Activated naive CD4-positive, alpha-beta T cell treated with anti-CD3 and anti-CD28 coated beads for 36 hours (primary cell): ENCODE measurements at regions of chr17 and their contacts with region 1.

Region 1: GRCh38 chr17:7435221-7435675 is at the start of gene TMEM102:
- DNase-seq: peak; percentile 99
- H3K4me3 Mint-ChIP-seq: peak within 1 kb of the TSS; percentile 92
- H3K27ac Mint-ChIP-seq: peak within 1 kb of the TSS; percentile 91
- H3K4me1 Mint-ChIP-seq: peaks cover 36% of the 10 kb centered on the region
- H3K27me3 Mint-ChIP-seq: peaks cover 12% of the 10 kb centered on the region
- total RNA-seq, gene TMEM102: 3.3 to 3.5 TPM

Region 2: GRCh38 chr17:6948562-6948961 is 486.7 kb before region 1 on chr17:
- CTCF ChIA-PET with region 1: no interaction called
- intact Hi-C with region 1: no loop called
- DNase-seq: peak; percentile 20
- H3K4me3 Mint-ChIP-seq: no peak overlapping the region
- H3K27ac Mint-ChIP-seq: peak overlapping the region; percentile 32
- H3K4me1 Mint-ChIP-seq: peaks cover 12% of the 10 kb centered on the region
- H3K27me3 Mint-ChIP-seq: no peaks in the 10 kb centered on the region

Region 3: DNA sequence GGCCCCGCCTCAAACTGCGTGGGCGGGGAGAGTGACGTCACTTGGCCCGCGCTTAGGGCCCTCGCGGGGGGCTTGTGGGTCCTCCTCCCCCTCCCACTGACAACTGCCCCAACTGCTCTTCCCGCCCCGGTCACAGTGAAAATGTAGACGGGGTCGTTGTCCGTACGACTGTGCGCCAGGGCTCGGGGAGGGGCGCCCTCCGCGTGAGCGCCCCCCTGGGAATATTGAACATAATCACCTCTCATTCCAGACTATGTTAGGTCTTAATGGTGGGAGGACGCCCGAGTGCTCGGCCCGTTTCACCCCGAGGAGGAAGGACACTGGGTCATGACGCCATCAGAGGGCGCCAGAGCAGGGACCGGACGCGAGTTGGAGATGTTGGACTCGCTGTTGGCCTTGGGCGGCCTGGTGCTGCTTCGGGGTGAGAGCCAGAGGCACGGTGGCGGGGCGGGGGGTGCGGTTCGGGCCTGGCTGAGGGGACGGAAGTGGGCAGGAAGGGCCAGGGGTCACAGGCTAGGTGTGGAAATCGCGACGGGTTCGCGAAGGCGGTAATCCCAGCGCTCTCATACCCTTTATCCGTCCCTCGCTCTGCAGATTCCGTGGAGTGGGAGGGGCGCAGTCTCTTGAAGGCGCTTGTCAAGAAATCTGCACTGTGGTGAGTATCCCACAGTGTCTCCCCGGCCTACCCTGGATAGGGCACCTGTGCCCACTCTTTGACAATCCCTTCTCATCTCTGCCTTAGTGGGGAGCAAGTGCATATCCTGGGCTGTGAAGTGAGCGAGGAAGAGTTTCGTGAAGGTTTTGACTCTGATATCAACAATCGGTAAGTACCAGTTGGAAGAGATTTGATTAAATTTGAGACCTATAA is 182.8 kb before region 1 on chr17 and contains the start of gene ELP5:
- CTCF ChIA-PET with region 1: no interaction called
- intact Hi-C with region 1: loop called (anchors 1 kb)
- DNase-seq: peak; percentile 93
- H3K4me3 Mint-ChIP-seq: peak within 1 kb of the TSS; percentile 86
- H3K27ac Mint-ChIP-seq: peak within 1 kb of the TSS; percentile 99
- H3K4me1 Mint-ChIP-seq: peaks cover 34% of the 10 kb centered on the region
- H3K27me3 Mint-ChIP-seq: no peaks in the 10 kb centered on the region
- total RNA-seq, gene ELP5: 52.4 to 53.5 TPM

Region 4: GRCh38 chr17:7383742-7384488 is 51.3 kb before region 1 on chr17:
- CTCF ChIA-PET with region 1: no interaction called
- intact Hi-C with region 1: loop called (anchors 1 kb)
- DNase-seq: peak; percentile 74
- H3K4me3 Mint-ChIP-seq: peak overlapping the region; percentile 70
- H3K27ac Mint-ChIP-seq: peak overlapping the region; percentile 47
- H3K4me1 Mint-ChIP-seq: peaks cover 4% of the 10 kb centered on the region
- H3K27me3 Mint-ChIP-seq: peaks cover 30% of the 10 kb centered on the region

Region 5: GRCh38 chr17:7454980-7455379 is 19.7 kb after region 1 on chr17:
- CTCF ChIA-PET with region 1: interaction called, 34 read pairs
- intact Hi-C with region 1: loop called (anchors 1 kb)
- DNase-seq: no peak
- H3K4me3 Mint-ChIP-seq: peak overlapping the region; percentile 84
- H3K27ac Mint-ChIP-seq: peak overlapping the region; percentile 83
- H3K4me1 Mint-ChIP-seq: peaks cover 17% of the 10 kb centered on the region
- H3K27me3 Mint-ChIP-seq: no peaks in the 10 kb centered on the region

Region 6: GRCh38 chr17:7548585-7549400 is 113.5 kb after region 1 on chr17 and contains the start of gene TNFSF12:
- CTCF ChIA-PET with region 1: interaction called, 3 read pairs
- intact Hi-C with region 1: loop called (anchors 1 kb)
- DNase-seq: peak; percentile 69
- H3K4me3 Mint-ChIP-seq: peak within 1 kb of the TSS; percentile 77
- H3K27ac Mint-ChIP-seq: peak within 1 kb of the TSS; percentile 33
- H3K4me1 Mint-ChIP-seq: peaks cover 47% of the 10 kb centered on the region
- H3K27me3 Mint-ChIP-seq: no peaks in the 10 kb centered on the region
- total RNA-seq, gene TNFSF12: 5.8 to 7.4 TPM